A673 (cell line): ENCODE measurements at regions of chr21 and their contacts with region 1.

Region 1: GRCh38 chr21:18630446-18630845 is 226.9 kb upstream of the TMPRSS15 start:
- DNase-seq: no peak
- H3K4me3 ChIP-seq: no peak overlapping the region
- H3K27ac ChIP-seq: no peak overlapping the region
- H3K4me1 ChIP-seq: no peaks in the 10 kb centered on the region
- H3K27me3 ChIP-seq: no peaks in the 10 kb centered on the region
- CTCF ChIP-seq: no peak

Region 2: GRCh38 chr21:18340387-18340942 is 290.0 kb before region 1 on chr21:
- CTCF ChIA-PET with region 1: no interaction called
- POLR2A ChIA-PET with region 1: no interaction called
- intact Hi-C with region 1: no loop called
- DNase-seq: no peak
- H3K4me3 ChIP-seq: no peak overlapping the region
- H3K27ac ChIP-seq: no peak overlapping the region
- H3K4me1 ChIP-seq: no peaks in the 10 kb centered on the region
- H3K27me3 ChIP-seq: no peaks in the 10 kb centered on the region
- CTCF ChIP-seq: no peak

Region 3: DNA sequence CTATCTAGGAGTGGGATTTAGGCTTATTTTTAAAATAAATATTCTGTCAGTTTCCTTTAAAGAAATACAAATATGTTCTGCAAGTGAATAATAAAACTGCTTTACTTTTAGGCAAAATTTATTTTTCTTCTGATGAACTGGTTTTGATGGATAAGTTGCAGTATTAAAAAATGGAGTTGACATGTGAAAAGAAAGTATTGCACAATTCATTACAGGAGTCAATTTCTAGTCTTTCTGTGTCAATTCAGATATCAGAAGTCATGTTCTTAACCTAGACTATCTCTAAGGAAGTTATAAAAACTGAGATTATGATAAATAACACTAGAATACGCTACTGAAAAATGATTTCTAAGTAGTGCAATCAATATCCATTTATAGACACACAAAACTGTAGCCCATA is 43.3 kb after region 1 on chr21:
- CTCF ChIA-PET with region 1: no interaction called
- POLR2A ChIA-PET with region 1: no interaction called
- intact Hi-C with region 1: loop called (anchors 5 kb)
- DNase-seq: no peak
- H3K4me3 ChIP-seq: no peak overlapping the region
- H3K27ac ChIP-seq: no peak overlapping the region
- H3K4me1 ChIP-seq: no peaks in the 10 kb centered on the region
- H3K27me3 ChIP-seq: no peaks in the 10 kb centered on the region
- CTCF ChIP-seq: no peak

Region 4: GRCh38 chr21:19011451-19011850 is 381.0 kb after region 1 on chr21:
- CTCF ChIA-PET with region 1: no interaction called
- POLR2A ChIA-PET with region 1: no interaction called
- intact Hi-C with region 1: no loop called
- DNase-seq: no peak
- H3K4me3 ChIP-seq: no peak overlapping the region
- H3K27ac ChIP-seq: no peak overlapping the region
- H3K4me1 ChIP-seq: no peaks in the 10 kb centered on the region
- H3K27me3 ChIP-seq: no peaks in the 10 kb centered on the region
- CTCF ChIP-seq: no peak

Region 5: DNA sequence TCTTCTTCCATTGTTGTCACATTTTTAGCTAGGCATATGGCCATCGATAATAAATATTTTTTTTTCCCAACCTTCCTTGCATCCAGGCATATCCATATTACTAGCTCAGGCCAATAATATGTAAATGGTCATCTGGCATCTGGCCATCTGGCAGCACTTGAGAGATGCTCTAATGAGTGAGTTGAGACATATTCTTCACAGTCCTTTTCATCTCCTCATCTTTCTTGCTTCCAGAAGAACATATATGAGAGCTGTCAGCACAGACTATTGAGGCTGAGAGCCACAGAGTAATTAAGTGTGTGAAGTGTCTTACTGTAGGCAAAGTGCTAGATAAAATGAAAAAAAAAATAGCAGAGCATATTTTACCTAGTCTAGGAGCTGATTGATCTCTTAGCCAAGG is 401.5 kb after region 1 on chr21:
- CTCF ChIA-PET with region 1: no interaction called
- POLR2A ChIA-PET with region 1: no interaction called
- intact Hi-C with region 1: no loop called
- DNase-seq: no peak
- H3K4me3 ChIP-seq: no peak overlapping the region
- H3K27ac ChIP-seq: no peak overlapping the region
- H3K4me1 ChIP-seq: no peaks in the 10 kb centered on the region
- H3K27me3 ChIP-seq: no peaks in the 10 kb centered on the region
- CTCF ChIP-seq: no peak